Ascending aorta (tissue), 2 donors: ENCODE measurements at regions of chr5 and their contacts with region 1.

Region 1: GRCh38 chr5:172322028-172322965 is 38.7 kb upstream of the UBTD2 start:
- DNase-seq: peak in 1 of 2 donors; percentile 31
- H3K4me3 ChIP-seq: no peak overlapping the region
- H3K27ac ChIP-seq: no peak overlapping the region
- H3K4me1 ChIP-seq: peaks cover 6 to 13% of the 10 kb centered on the region in 2 donors
- H3K27me3 ChIP-seq: no peaks in the 10 kb centered on the region
- CTCF ChIP-seq: no peak

Region 2: DNA sequence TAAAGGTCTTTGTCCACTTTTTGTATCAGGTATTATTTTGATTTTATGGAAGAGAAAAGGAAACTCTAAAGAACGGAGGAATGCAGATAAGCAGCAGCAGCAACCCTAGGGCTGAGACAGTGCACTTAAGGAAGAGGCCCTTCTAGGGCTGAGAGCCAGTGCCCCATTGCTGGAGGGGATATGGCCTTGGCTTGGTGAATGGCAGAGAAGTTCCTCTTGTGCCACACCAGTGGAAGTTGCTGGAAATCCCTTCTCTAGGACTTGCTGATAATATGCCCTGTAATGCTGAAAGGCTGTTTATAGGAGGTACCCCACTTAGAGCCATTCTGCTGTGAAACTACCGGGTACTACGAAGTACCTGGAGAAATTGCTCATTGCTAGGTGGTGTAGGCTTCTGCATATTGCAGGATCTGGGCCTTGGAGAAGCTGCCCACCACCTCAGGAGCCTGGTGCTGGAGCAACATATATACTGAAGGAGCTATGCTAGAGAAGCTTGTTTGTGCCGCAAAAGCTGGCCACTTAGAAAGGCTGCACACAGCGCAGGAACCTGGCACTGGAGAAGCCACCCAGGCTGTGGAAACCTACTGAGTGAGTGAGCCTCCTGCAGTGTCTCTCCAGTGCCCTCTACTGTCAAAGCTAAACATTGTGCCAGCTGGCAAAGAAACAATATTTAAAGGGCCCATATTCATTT is 29.1 kb before region 1 on chr5:
- intact Hi-C with region 1: loop called (anchors 1 kb)
- DNase-seq: peak in 1 of 2 donors; percentile 80
- H3K4me3 ChIP-seq: no peak overlapping the region
- H3K27ac ChIP-seq: no peak overlapping the region
- H3K4me1 ChIP-seq: no peaks in the 10 kb centered on the region
- H3K27me3 ChIP-seq: no peaks in the 10 kb centered on the region
- CTCF ChIP-seq: peak; percentile 66 to 80 (median 71)

Region 3: GRCh38 chr5:172303572-172304335 is 18.5 kb before region 1 on chr5:
- intact Hi-C with region 1: loop called (anchors 1 kb)
- DNase-seq: no peak
- H3K4me3 ChIP-seq: no peak overlapping the region
- H3K27ac ChIP-seq: no peak overlapping the region
- H3K4me1 ChIP-seq: peaks cover 0 to under 1% of the 10 kb centered on the region in 2 donors
- H3K27me3 ChIP-seq: no peaks in the 10 kb centered on the region
- CTCF ChIP-seq: no peak

Region 4: GRCh38 chr5:172707285-172708182 is 385.2 kb after region 1 on chr5:
- intact Hi-C with region 1: no loop called
- DNase-seq: no peak
- H3K4me3 ChIP-seq: no peak overlapping the region
- H3K27ac ChIP-seq: no peak overlapping the region
- H3K4me1 ChIP-seq: no peaks in the 10 kb centered on the region
- H3K27me3 ChIP-seq: no peaks in the 10 kb centered on the region
- CTCF ChIP-seq: peak in 1 of 3 experiments; percentile 20